ENCODE measurements at regions of chr18 and their contacts with region 1.

Region 1: GRCh38 chr18:34787931-34788532 is 77.9 kb downstream of the DTNA start:
- DNase-seq: peak in 2 of 5 donors; percentile 20 to 32
- ATAC-seq: peak in 3 of 4 donors; percentile 68 to 69 (median 68)
- H3K4me3 ChIP-seq: no peak overlapping the region
- H3K27ac ChIP-seq: no peak overlapping the region
- H3K4me1 ChIP-seq: peaks cover 0 to 5% (median 0%) of the 10 kb centered on the region in 12 donors
- H3K27me3 ChIP-seq: no peaks in the 10 kb centered on the region
- CTCF ChIP-seq: peak; percentile 60 to 87 (median 78)
- POLR2A ChIP-seq: no peak

Region 2: GRCh38 chr18:34128436-34128835 is 659.6 kb before region 1 on chr18:
- intact Hi-C with region 1: loop called in 8 of 10 experiments (anchors 5 to 10 kb)
- DNase-seq: no peak
- ATAC-seq: no peak
- H3K4me3 ChIP-seq: no peak overlapping the region
- H3K27ac ChIP-seq: no peak overlapping the region
- H3K4me1 ChIP-seq: no peaks in the 10 kb centered on the region
- H3K27me3 ChIP-seq: no peaks in the 10 kb centered on the region
- CTCF ChIP-seq: no peak
- POLR2A ChIP-seq: no peak

Region 3: GRCh38 chr18:34352385-34353163 is 435.5 kb before region 1 on chr18:
- intact Hi-C with region 1: loop called in 9 of 10 experiments (anchors 5 to 10 kb)
- DNase-seq: no peak
- ATAC-seq: no peak
- H3K4me3 ChIP-seq: no peak overlapping the region
- H3K27ac ChIP-seq: no peak overlapping the region
- H3K4me1 ChIP-seq: no peaks in the 10 kb centered on the region
- H3K27me3 ChIP-seq: no peaks in the 10 kb centered on the region
- CTCF ChIP-seq: peak in 10 of 12 donors; percentile 17 to 53 (median 38)
- POLR2A ChIP-seq: no peak

Region 4: GRCh38 chr18:34493099-34493544 is 294.9 kb before region 1 on chr18:
- intact Hi-C with region 1: loop called in 4 of 10 experiments (anchors 5 to 10 kb)
- DNase-seq: peak; percentile 83 to 91 (median 84)
- ATAC-seq: peak; percentile 89 to 95 (median 92)
- H3K4me3 ChIP-seq: peak overlapping the region; percentile 37 to 73 (median 66)
- H3K27ac ChIP-seq: peak overlapping the region; percentile 72 to 91 (median 85)
- H3K4me1 ChIP-seq: peaks cover 0 to 20% (median 9%) of the 10 kb centered on the region in 12 donors
- H3K27me3 ChIP-seq: peaks cover 0 to 12% (median 0%) of the 10 kb centered on the region in 9 donors
- CTCF ChIP-seq: no peak
- POLR2A ChIP-seq: no peak

Region 5: DNA sequence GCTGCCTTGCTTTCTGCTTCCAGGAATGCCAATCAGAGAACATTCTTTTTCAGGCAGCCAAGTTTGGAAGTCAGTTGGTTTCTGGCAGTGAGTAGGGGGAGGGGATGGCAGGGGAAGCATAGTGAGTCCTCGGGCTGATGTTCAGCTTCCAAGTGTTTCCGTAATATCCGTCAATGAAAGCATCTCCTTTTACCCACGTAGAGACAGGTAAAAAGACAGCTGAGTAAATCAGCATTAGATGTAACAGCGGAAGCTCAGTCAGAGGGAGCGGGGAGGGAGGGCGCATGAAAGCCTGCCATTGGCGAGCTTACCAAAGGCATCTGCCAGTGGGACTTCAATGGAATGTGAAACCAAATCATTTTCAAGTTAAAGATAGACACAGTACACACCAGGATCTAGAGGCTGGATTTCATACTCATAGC is 195.1 kb before region 1 on chr18:
- intact Hi-C with region 1: loop called in 6 of 10 experiments (anchors 5 to 10 kb)
- DNase-seq: peak in 4 of 5 donors; percentile 61 to 78 (median 68)
- ATAC-seq: peak; percentile 89 to 95 (median 94)
- H3K4me3 ChIP-seq: peak overlapping the region in 11 of 12 donors; percentile 26 to 57 (median 48)
- H3K27ac ChIP-seq: peak overlapping the region; percentile 43 to 86 (median 76)
- H3K4me1 ChIP-seq: peaks cover 0 to 37% (median 6%) of the 10 kb centered on the region in 12 donors
- H3K27me3 ChIP-seq: no peaks in the 10 kb centered on the region
- CTCF ChIP-seq: no peak
- POLR2A ChIP-seq: no peak

Region 6: DNA sequence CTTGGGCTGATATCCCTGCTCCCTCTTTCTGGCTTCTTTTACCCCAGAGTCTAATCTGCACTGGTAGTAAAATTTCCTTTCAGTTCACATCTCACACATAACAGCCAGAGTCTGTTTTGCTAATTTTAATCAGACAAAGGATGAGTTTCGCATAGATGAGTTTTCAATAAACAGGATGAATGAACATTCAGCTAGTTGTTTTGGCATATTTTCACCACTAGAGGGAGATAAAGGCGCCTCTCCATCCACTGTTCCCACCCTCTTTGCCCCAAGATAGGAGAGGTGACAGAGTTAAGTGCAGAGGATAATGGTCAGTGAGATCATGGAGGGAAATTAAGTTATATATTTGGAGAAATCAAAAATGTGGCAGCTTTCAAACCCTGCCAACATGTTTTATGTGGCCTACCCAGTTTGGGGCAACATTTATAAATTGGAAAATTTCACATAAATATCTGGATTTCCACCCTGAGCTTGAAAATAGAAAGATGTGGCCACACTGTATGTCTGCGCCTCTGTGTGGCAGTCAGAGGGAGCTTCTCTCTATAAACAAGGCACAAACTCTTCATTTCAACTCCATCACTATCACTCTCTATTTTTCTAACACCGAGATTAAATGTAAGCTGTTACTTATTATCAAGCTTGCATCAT is 126.4 kb before region 1 on chr18:
- intact Hi-C with region 1: loop called in 9 of 10 experiments (anchors 2 to 5 kb)
- DNase-seq: no peak
- ATAC-seq: peak in 3 of 4 donors; percentile 57 to 67 (median 62)
- H3K4me3 ChIP-seq: no peak overlapping the region
- H3K27ac ChIP-seq: peak overlapping the region in 6 of 12 donors; percentile 7 to 92 (median 82)
- H3K4me1 ChIP-seq: peaks cover 0 to 55% (median 18%) of the 10 kb centered on the region in 12 donors
- H3K27me3 ChIP-seq: no peaks in the 10 kb centered on the region
- CTCF ChIP-seq: peak; percentile 67 to 83 (median 76)
- POLR2A ChIP-seq: no peak

Region 7: DNA sequence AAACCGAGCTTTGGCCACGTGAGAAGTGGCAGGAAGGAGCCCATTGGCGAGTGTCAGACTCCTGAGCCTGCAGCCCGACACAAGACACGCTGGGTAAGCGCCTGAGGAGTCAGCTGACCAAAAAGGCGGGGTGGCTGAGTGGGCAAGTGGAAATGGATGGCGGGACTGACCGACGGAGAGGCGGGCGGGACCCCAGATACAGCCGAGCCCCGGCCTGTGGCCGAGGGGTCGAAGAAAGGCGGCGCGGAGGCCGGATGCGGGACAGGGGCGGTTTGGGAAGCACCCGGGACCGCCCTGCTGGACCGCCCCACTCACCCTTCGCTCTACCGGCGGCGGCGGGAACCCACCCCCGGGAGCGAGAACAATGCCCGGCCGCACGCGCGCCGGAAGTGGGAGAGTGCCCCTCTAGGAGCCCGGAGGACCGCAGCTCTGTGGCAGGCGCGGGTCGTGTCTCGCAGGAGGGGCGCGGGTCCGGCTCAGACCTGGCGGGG is 479.2 kb after region 1 on chr18:
- intact Hi-C with region 1: no loop called
- DNase-seq: peak; percentile 84 to 89 (median 86)
- ATAC-seq: peak; percentile 79 to 98 (median 96)
- H3K4me3 ChIP-seq: peak overlapping the region; percentile 57 to 92 (median 67)
- H3K27ac ChIP-seq: peak overlapping the region; percentile 48 to 93 (median 88)
- H3K4me1 ChIP-seq: peaks cover 0 to 10% (median 5%) of the 10 kb centered on the region in 12 donors
- H3K27me3 ChIP-seq: no peaks in the 10 kb centered on the region
- CTCF ChIP-seq: peak in 5 of 12 donors; percentile 8 to 25 (median 15)
- POLR2A ChIP-seq: peak in 1 of 2 donors; percentile 58

Measured in heart left ventricle (tissue), 16 donors.